ENCODE measurements at regions of chr14 and their contacts with region 1.

Region 1: GRCh38 chr14:51884086-51884927 is 23.9 kb downstream of the GNG2 start:
- DNase-seq: no peak
- ATAC-seq: peak; percentile 84
- H3K4me3 ChIP-seq: peak overlapping the region; percentile 4; the same call in 1 of the 2 replicates
- H3K27ac ChIP-seq: peak overlapping the region; percentile 34
- H3K4me1 ChIP-seq: peaks cover 38% of the 10 kb centered on the region
- H3K27me3 ChIP-seq: no peaks in the 10 kb centered on the region
- CTCF ChIP-seq: no peak
- EP300 ChIP-seq: peak in 1 of 2 experiments; percentile 56; a peak in 1 of 4 replicates
- POLR2A ChIP-seq: no peak
- RAD21 ChIP-seq: no peak

Region 2: DNA sequence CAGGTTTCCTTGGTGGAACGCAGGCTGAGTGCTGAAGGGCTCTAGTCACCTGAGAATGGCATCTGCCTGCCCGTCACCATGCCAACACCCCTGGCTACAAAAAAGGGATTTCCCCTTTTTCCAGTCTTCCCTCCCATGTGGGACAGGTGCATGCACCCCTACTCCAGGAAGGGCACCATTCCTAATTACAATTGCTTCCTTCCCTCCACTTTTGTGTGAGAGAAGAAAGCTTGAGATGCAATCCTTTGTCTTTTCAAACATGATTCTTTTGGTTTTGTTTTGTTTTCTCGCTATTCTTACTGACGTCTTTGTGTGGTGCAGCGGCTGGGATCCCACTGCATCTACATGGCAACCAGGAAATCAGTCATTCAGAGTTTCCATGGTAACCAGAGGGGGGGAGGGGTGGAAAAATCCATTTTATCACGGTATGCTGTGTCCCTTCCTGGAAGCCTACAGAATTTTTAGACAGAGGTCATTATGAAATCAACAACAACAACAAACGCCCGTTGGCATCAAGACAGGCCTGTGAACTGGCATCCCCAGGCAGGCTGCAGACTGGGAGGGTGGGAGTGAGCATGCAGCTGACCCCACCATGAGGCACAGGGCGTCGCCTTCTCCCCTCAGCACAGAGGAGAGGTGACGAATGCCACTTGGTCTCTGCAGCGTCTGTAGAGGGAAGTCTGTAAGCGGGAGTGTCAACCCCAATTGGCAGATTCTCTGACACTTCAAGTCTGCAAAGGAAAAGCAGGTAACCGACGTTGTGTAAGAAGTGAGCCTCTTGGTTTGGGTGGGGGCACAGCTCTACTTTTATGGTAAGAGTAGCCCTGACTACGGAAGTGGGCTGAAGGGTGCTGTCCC is 37.4 kb before region 1 on chr14:
- CTCF ChIA-PET with region 1: interaction called, 3 read pairs
- POLR2A ChIA-PET with region 1: interaction called, 19 read pairs
- RAD21 ChIA-PET with region 1: interaction called, 13 read pairs
- SMC1A ChIA-PET with region 1: interaction called, 37 read pairs
- in situ Hi-C with region 1: no loop called
- intact Hi-C with region 1: loop called (anchors 5 kb)
- DNase-seq: peak; percentile 93
- ATAC-seq: peak; percentile 83
- H3K4me3 ChIP-seq: peak overlapping the region; percentile 67
- H3K27ac ChIP-seq: peak overlapping the region; percentile 97
- H3K4me1 ChIP-seq: peaks cover 54% of the 10 kb centered on the region
- H3K27me3 ChIP-seq: no peaks in the 10 kb centered on the region
- CTCF ChIP-seq: no peak
- EP300 ChIP-seq: peak; percentile 75 to 93
- POLR2A ChIP-seq: peak; percentile 87
- RAD21 ChIP-seq: no peak

Region 3: DNA sequence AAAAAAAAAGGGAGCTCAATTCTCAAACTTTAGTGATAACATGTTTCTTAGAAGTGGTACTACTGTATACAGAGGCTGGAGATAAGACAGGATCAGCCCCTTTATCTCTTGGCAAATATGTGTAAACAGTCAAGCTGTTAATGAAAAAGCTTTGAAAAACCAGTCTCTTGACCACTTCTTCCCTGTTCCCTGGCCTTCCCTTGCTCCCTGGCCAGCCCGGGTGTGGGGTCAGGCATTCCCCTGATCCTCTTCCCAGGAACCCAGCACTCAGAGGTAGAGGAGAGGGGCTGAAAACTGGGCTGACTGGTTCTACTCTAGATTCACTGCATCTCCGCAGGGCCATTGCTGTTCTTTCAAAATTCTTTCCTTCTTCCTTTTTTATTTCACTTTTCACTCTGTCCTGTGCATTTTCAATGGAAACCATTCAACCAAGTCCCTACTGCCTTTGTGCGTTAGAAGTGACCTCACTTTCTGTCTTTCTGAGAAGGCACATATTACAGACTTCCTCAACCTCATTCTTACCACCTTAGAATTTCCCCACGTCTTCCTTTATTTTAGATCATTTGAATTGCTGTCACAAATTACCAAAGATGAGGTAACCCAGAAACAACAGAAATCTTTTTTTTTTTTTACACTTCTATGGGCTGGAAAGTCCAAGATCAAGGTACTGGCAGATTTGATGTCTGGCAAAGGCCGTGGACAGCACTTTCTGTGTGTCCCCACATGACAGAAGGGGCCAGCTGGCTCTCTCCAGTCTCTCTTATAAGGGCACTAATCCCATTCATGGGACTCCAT is 18.2 kb before region 1 on chr14:
- CTCF ChIA-PET with region 1: interaction called, 11 read pairs
- POLR2A ChIA-PET with region 1: interaction called, 37 read pairs
- RAD21 ChIA-PET with region 1: interaction called, 197 read pairs
- SMC1A ChIA-PET with region 1: interaction called, 254 read pairs
- in situ Hi-C with region 1: no loop called
- intact Hi-C with region 1: no loop called
- DNase-seq: no peak
- ATAC-seq: peak; percentile 62
- H3K4me3 ChIP-seq: peak overlapping the region; percentile 34
- H3K27ac ChIP-seq: peak overlapping the region; percentile 88
- H3K4me1 ChIP-seq: peaks cover 44% of the 10 kb centered on the region
- H3K27me3 ChIP-seq: no peaks in the 10 kb centered on the region
- CTCF ChIP-seq: no peak
- EP300 ChIP-seq: 0 out of 4 replicates have a peak, but pooled peaks of 1 of the 2 experiments have one; percentile 20
- POLR2A ChIP-seq: no peak
- RAD21 ChIP-seq: no peak

Region 4: GRCh38 chr14:51895375-51895774 is 11.1 kb after region 1 on chr14:
- CTCF ChIA-PET with region 1: interaction called, 7 read pairs
- POLR2A ChIA-PET with region 1: interaction called, 5 read pairs
- RAD21 ChIA-PET with region 1: interaction called, 12 read pairs
- SMC1A ChIA-PET with region 1: interaction called, 11 read pairs
- in situ Hi-C with region 1: no loop called
- intact Hi-C with region 1: no loop called
- DNase-seq: no peak
- ATAC-seq: no peak
- H3K4me3 ChIP-seq: no peak overlapping the region
- H3K27ac ChIP-seq: no peak overlapping the region
- H3K4me1 ChIP-seq: no peaks in the 10 kb centered on the region
- H3K27me3 ChIP-seq: no peaks in the 10 kb centered on the region
- CTCF ChIP-seq: no peak
- EP300 ChIP-seq: no peak
- POLR2A ChIP-seq: no peak
- RAD21 ChIP-seq: no peak

Measured in GM12878 (cell line).